ENCODE measurements at regions of chr9 and their contacts with region 1.

Region 1: GRCh38 chr9:26919698-26920097 is 27.1 kb upstream of the CAAP1 start:
- DNase-seq: no peak
- H3K4me3 ChIP-seq: no peak overlapping the region
- H3K27ac ChIP-seq: no peak overlapping the region
- H3K4me1 ChIP-seq: no peaks in the 10 kb centered on the region
- CTCF ChIP-seq: no peak

Region 2: DNA sequence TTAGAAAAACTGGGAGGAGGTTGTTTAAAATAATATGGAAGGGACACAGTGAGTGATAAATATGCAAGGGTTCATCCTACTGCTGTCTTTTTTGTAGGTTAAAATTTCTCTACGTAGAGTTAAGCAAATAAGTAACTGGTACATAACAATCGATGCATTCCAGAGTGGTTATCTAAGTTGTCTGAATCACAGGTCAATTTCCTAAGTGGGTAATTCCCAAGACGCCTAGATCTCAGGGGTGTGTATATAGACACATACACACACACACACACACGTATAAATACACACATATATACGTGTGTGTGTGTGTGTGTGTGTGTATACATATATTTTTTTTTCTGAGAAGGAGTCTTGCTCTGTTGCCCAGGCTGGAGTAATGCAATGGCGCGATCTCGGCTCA is 49.4 kb before region 1 on chr9:
- CTCF ChIA-PET with region 1: no interaction called
- POLR2A ChIA-PET with region 1: interaction called, 11 read pairs
- intact Hi-C with region 1: no loop called
- DNase-seq: no peak
- H3K4me3 ChIP-seq: no peak overlapping the region
- H3K27ac ChIP-seq: no peak overlapping the region
- H3K4me1 ChIP-seq: no peaks in the 10 kb centered on the region
- CTCF ChIP-seq: no peak

Region 3: GRCh38 chr9:26954050-26954508 is 34.4 kb after region 1 on chr9:
- CTCF ChIA-PET with region 1: no interaction called
- POLR2A ChIA-PET with region 1: no interaction called
- intact Hi-C with region 1: no loop called
- DNase-seq: no peak
- H3K4me3 ChIP-seq: no peak overlapping the region
- H3K27ac ChIP-seq: no peak overlapping the region
- H3K4me1 ChIP-seq: peaks cover 13% of the 10 kb centered on the region
- CTCF ChIP-seq: no peak

Measured in OCI-LY7 (cell line).